Breast epithelium (tissue), 4 donors: ENCODE measurements at regions of chr15 and their contacts with region 1.

Region 1: GRCh38 chr15:74631408-74632247 is 16.0 kb downstream of the CLK3 start:
- DNase-seq: no peak
- H3K4me3 ChIP-seq: no peak overlapping the region
- H3K27ac ChIP-seq: no peak overlapping the region
- H3K4me1 ChIP-seq: no peaks in the 10 kb centered on the region
- H3K27me3 ChIP-seq: no peaks in the 10 kb centered on the region
- CTCF ChIP-seq: peak; percentile 17 to 76 (median 65)
- POLR2A ChIP-seq: no peak

Region 2: DNA sequence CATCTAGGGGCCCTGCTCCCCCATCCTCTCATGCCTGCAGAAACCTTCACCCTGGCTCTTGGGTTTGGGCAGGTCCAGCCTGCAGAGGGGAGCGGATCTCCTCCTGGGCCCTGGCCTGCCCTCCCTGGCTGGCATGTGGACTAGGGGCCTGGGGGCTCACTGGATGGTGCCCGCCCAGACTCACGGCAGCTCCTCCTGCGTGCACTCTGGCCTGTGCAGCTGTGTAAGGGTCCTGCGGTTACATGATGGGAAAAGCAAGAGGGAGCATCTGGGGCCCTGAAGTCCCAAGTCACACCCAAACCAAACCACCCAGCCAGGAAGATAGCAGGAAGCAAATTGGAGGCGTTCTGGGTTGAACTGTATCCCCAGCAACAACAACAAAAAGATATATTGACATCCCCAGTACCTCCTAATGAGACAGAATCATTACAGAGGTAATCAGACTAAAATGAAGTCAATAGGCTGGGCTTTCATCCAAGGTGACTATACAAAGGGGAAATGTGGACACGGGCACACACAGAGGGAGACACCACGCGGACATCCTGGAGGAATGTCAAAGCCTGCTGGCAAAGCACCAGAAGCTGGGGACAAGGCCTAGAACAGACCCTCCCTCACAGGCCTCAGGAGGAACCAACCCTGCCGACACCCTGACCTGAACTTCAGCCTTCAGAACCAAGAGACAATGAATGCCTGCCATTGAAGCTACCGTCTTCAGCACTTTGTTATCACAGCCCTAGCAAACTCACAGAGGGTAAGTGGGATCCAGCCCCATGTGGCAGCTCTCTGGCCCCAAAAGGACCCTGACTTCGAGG is 26.4 kb before region 1 on chr15:
- intact Hi-C with region 1: no loop called
- DNase-seq: no peak
- H3K4me3 ChIP-seq: no peak overlapping the region
- H3K27ac ChIP-seq: no peak overlapping the region
- H3K4me1 ChIP-seq: no peaks in the 10 kb centered on the region
- H3K27me3 ChIP-seq: no peaks in the 10 kb centered on the region
- CTCF ChIP-seq: no peak
- POLR2A ChIP-seq: no peak

Region 3: GRCh38 chr15:74763416-74763815 is 131.8 kb after region 1 on chr15:
- intact Hi-C with region 1: loop called (anchors 5 kb)
- DNase-seq: no peak
- H3K4me3 ChIP-seq: no peak overlapping the region
- H3K27ac ChIP-seq: no peak overlapping the region
- H3K4me1 ChIP-seq: no peaks in the 10 kb centered on the region
- H3K27me3 ChIP-seq: no peaks in the 10 kb centered on the region
- CTCF ChIP-seq: no peak
- POLR2A ChIP-seq: no peak